CD4-positive, alpha-beta memory T cell (primary cell): ENCODE measurements at regions of chr1 and their contacts with region 1.

Region 1: GRCh38 chr1:93179886-93180722 is at the start of gene TMED5:
- DNase-seq: peak; percentile 97 to 98 (median 97)
- H3K4me3 ChIP-seq: peak within 1 kb of the TSS; percentile 84 to 99
- H3K4me3 Mint-ChIP-seq: peak within 1 kb of the TSS; percentile 89 to 99 (median 93)
- H3K27ac ChIP-seq: peak within 1 kb of the TSS; percentile 98
- H3K27ac Mint-ChIP-seq: peak within 1 kb of the TSS; percentile 90 to 99 (median 96)
- H3K4me1 ChIP-seq: peaks cover 59% of the 10 kb centered on the region
- H3K4me1 Mint-ChIP-seq: peaks cover 26 to 70% (median 41%) of the 10 kb centered on the region in 4 donors
- H3K27me3 ChIP-seq: no peaks in the 10 kb centered on the region
- H3K27me3 Mint-ChIP-seq: no peaks in the 10 kb centered on the region
- total RNA-seq, gene TMED5: 60.1 to 60.8 TPM

Region 2: DNA sequence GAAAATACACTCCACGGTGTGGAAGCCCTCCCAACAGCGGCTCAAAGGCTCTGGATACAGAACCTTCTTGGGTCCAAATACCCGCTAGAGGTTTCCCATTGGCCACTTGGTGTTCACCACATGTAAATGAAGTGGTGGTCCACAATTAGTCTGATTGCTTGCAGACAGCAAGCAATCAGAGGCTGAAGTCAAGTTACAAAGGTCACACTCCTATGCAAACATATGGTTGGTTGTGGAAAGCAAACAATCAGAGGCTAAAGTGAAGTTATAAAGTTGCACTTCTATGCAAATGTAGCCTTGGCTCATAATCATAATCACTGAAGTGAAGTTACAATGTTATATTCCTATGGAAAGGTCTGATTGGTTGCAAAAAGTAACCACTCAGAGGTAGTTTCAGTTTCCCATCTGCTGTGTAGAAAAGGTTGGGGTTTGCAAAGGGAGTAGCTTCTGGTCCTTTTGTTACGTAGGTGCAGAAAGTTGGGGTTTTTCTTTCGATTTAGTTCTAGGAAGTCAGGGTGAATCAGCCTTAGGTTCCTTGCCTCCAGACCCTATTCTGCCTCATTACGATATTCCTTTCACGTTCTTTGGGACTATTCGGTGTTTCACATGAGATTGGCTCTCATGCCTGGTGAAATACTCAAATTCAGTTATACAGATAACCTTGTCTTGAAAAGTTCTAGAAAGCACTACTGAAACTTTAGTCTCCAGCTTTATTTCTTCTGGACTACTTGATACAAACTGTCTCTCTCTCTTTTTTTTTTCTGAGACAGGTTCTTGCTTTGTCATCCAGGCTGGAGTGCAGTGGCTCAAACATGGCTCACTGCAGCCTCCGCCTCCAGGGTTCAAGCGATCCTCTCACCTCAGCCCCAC is 137.7 kb before region 1 on chr1:
- CTCF ChIA-PET with region 1: no interaction called
- POLR2A ChIA-PET with region 1: no interaction called
- intact Hi-C with region 1: loop called (anchors 1 kb)
- DNase-seq: peak; percentile 68 to 86 (median 80)
- H3K4me3 ChIP-seq: peak overlapping the region; percentile 3 to 49
- H3K4me3 Mint-ChIP-seq: peak overlapping the region; percentile 69 to 93 (median 87)
- H3K27ac ChIP-seq: peak overlapping the region; percentile 76
- H3K27ac Mint-ChIP-seq: peak overlapping the region; percentile 80 to 98 (median 97)
- H3K4me1 ChIP-seq: peaks cover 13% of the 10 kb centered on the region
- H3K4me1 Mint-ChIP-seq: peaks cover 4 to 18% (median 10%) of the 10 kb centered on the region in 4 donors
- H3K27me3 ChIP-seq: no peaks in the 10 kb centered on the region
- H3K27me3 Mint-ChIP-seq: no peaks in the 10 kb centered on the region

Region 3: GRCh38 chr1:93219443-93219842 is 39.3 kb after region 1 on chr1:
- CTCF ChIA-PET with region 1: no interaction called
- POLR2A ChIA-PET with region 1: no interaction called
- intact Hi-C with region 1: loop called (anchors 1 kb)
- DNase-seq: peak; percentile 6 to 36 (median 24)
- H3K4me3 ChIP-seq: peak overlapping the region; percentile 18 to 71
- H3K4me3 Mint-ChIP-seq: peak overlapping the region; percentile 62 to 89 (median 82)
- H3K27ac ChIP-seq: peak overlapping the region; percentile 30
- H3K27ac Mint-ChIP-seq: peak overlapping the region; percentile 7 to 84 (median 57)
- H3K4me1 ChIP-seq: peaks cover 17% of the 10 kb centered on the region
- H3K4me1 Mint-ChIP-seq: peaks cover 14 to 26% (median 20%) of the 10 kb centered on the region in 4 donors
- H3K27me3 ChIP-seq: no peaks in the 10 kb centered on the region
- H3K27me3 Mint-ChIP-seq: no peaks in the 10 kb centered on the region

Region 4: GRCh38 chr1:94417978-94418663 is 1238.0 kb after region 1 on chr1 and contains the start of gene ABCD3:
- CTCF ChIA-PET with region 1: no interaction called
- POLR2A ChIA-PET with region 1: no interaction called
- intact Hi-C with region 1: loop called (anchors 2 kb)
- DNase-seq: peak; percentile 96 to 99 (median 98)
- H3K4me3 ChIP-seq: peak within 1 kb of the TSS; percentile 59 to 88
- H3K4me3 Mint-ChIP-seq: peak within 1 kb of the TSS in 2 of 8 donors; percentile 90 to 91
- H3K27ac ChIP-seq: peak within 1 kb of the TSS; percentile 70
- H3K27ac Mint-ChIP-seq: peak within 1 kb of the TSS in 6 of 7 donors; percentile 37 to 92 (median 88)
- H3K4me1 ChIP-seq: peaks cover 46% of the 10 kb centered on the region
- H3K4me1 Mint-ChIP-seq: peaks cover 23 to 40% (median 28%) of the 10 kb centered on the region in 4 donors
- H3K27me3 ChIP-seq: no peaks in the 10 kb centered on the region
- H3K27me3 Mint-ChIP-seq: peaks cover 0 to 4% of the 10 kb centered on the region in 2 donors
- total RNA-seq, gene ABCD3: 23.6 to 23.8 TPM